Activated T-helper 2 cell treated with anti-CD3 and anti-CD28 coated beads, Interferon-gamma antibody, Interleukin-2, Interleukin-4, amounts not matched to agents 10 μg/mL and 5 μg/mL and 100 μg/mL, durations not matched to agents 14 hours and 24 hours and 36 hours (primary cell): ENCODE measurements at regions of chr1 and their contacts with region 1.

Region 1: GRCh38 chr1:15128520-15129313 is 24.8 kb upstream of the TMEM51 start:
- DNase-seq: peak; percentile 60
- H3K4me3 Mint-ChIP-seq: no peak overlapping the region
- H3K27ac Mint-ChIP-seq: no peak overlapping the region
- H3K4me1 Mint-ChIP-seq: no peaks in the 10 kb centered on the region
- H3K27me3 Mint-ChIP-seq: peaks cover 15% of the 10 kb centered on the region

Region 2: GRCh38 chr1:15014516-15014915 is 114.2 kb before region 1 on chr1:
- intact Hi-C with region 1: no loop called
- DNase-seq: no peak
- H3K4me3 Mint-ChIP-seq: no peak overlapping the region
- H3K27ac Mint-ChIP-seq: no peak overlapping the region
- H3K4me1 Mint-ChIP-seq: no peaks in the 10 kb centered on the region
- H3K27me3 Mint-ChIP-seq: no peaks in the 10 kb centered on the region

Region 3: DNA sequence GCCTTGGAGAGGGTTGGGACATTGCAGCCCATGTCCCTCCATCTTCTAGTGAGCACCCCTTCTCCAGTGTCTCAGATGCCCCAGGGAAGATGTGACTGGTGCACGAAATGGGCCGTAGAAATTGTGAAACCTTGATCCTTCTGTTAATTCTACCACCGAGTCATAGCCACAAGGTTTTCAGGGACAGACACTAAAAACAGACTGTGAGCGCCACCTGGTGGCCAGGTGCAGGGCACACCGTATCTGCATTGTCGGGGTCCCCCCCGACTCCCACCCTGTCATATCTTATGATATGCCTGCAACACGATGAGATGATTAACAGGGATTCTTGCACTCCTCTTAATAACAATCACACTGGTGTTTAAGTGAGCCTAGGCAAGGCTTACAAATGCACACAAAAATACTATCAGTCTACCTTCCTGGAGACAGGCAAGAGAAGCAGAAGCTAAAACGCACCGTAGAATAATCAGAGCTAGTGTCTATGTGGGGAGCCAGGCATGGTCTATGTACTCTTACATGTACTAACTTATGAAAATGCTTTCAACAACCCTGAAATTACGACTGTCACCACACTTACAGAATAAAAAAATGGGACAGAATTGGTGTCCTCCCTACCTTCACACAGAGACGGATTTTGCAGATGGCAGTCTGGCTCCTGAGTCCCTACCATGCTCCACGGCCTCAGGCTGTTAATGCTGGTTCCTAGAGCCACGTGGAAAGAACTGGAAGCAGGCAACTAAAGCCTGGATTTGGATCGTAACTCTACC is 176.2 kb after region 1 on chr1:
- intact Hi-C with region 1: loop called (anchors 1 kb)
- DNase-seq: peak; percentile 33
- H3K4me3 Mint-ChIP-seq: no peak overlapping the region
- H3K27ac Mint-ChIP-seq: no peak overlapping the region
- H3K4me1 Mint-ChIP-seq: no peaks in the 10 kb centered on the region
- H3K27me3 Mint-ChIP-seq: peaks cover 7% of the 10 kb centered on the region